ENCODE measurements at regions of chr2 and their contacts with region 1.

Region 1: DNA sequence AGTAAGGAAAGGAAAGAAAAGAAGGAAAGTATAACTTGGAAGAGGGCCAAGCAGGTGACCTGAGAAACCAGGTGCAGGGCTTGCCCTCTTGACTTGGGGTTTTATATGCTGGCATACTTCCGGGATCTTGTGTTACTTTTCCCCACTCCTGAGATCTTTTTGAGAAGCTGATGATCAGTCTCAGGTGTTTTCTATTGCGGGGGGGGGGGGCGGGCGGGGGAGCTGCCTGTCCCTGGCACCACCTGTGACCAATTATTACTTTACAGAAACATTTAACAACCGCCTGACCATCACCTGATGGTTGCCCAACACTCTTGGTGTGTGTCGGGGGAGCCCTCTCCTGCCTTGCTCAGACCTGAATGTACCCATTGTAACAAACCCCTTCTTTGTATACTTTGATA is 6.9 kb upstream of the CASP10 start:
- DNase-seq: no peak
- H3K4me3 ChIP-seq: no peak overlapping the region
- H3K4me3 Mint-ChIP-seq: no peak overlapping the region
- H3K27ac ChIP-seq: no peak overlapping the region
- H3K27ac Mint-ChIP-seq: peak overlapping the region in 1 of 8 donors; percentile 68
- H3K4me1 ChIP-seq: peaks cover 5% of the 10 kb centered on the region
- H3K4me1 Mint-ChIP-seq: peaks cover 12 to 15% (median 13%) of the 10 kb centered on the region in 3 donors
- H3K27me3 ChIP-seq: no peaks in the 10 kb centered on the region
- H3K27me3 Mint-ChIP-seq: no peaks in the 10 kb centered on the region

Region 2: DNA sequence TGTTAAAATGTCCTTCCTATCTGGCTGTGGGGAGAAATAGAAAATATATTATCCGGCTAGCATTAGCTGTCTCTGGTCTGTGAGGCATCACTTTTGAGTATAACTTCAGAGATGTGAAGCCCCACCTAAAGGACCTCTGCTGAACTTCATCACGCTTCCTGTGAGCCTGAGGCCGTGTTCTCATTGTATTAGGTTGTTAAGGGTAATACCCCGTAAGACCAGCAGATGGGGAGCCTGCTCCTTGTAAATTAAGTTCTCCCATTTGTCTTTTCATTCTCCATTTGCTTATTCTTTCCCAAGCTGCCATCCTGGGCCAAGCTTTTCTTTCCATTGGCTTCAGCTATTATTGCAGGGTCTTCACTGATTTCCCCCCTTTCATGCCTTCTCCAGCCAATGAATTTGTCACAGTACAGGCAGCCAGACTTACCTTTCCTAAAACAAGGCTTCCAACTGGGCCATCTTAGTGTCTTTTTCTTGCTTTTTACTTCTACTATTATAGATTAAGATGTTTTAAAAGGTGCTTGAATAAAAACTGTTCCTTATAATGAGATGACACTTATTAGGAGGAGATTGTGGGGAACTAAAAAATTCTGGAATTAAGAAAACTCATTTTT is 274.5 kb before region 1 on chr2:
- CTCF ChIA-PET with region 1: interaction called, 19 read pairs
- POLR2A ChIA-PET with region 1: no interaction called
- DNase-seq: peak; percentile 58 to 84 (median 71)
- H3K4me3 ChIP-seq: no peak overlapping the region
- H3K4me3 Mint-ChIP-seq: no peak overlapping the region
- H3K27ac ChIP-seq: no peak overlapping the region
- H3K27ac Mint-ChIP-seq: peak overlapping the region; percentile 1 to 92 (median 55)
- H3K4me1 ChIP-seq: no peaks in the 10 kb centered on the region
- H3K4me1 Mint-ChIP-seq: peaks cover 3 to 14% (median 9%) of the 10 kb centered on the region in 3 donors
- H3K27me3 ChIP-seq: no peaks in the 10 kb centered on the region
- H3K27me3 Mint-ChIP-seq: no peaks in the 10 kb centered on the region

Measured in CD8-positive, alpha-beta memory T cell (primary cell).